Adrenal gland (tissue), 19 donors: ENCODE measurements at regions of chr2 and their contacts with region 1.

Region 1: DNA sequence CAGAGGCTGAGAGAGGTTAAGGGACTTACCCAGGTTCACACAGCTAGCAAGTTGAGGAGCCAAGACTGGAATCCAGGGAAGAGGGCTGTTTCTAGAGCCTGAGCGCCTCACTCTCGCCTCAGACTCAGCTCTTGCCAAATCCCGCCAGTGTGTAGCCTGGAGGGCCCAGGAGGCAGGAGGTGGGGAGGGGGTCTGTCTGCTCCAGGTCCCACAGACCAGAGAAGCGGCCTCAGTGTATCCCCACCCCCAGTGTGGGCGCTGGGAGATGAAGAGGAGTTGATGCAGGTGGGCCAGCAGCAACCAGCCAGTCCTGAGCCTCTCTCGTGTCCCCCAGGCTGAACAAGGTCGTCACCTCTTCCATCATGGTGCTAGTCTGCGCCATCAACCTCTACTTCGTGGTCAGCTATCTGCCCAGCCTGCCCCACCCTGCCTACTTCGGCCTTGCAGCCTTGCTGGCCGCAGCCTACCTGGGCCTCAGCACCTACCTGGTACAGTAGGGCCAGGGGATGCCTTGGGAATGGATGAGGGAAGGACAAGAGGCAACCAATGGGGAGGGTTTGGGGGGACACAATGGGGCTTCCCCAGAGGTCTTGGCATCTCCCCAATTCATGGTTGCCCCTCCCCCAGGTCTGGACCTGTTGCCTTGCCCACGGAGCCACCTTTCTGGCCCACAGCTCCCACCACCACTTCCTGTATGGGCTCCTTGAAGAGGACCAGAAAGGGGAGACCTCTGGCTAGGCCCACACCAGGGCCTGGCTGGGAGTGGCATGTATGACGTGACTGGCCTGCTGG is 5.2 kb upstream of the CTDSP1 start:
- DNase-seq: peak in 2 of 7 donors; percentile 44 to 56
- H3K4me3 ChIP-seq: no peak overlapping the region
- H3K27ac ChIP-seq: no peak overlapping the region
- H3K4me1 ChIP-seq: peaks cover 24 to 27% of the 10 kb centered on the region in 2 donors
- H3K27me3 ChIP-seq: no peaks in the 10 kb centered on the region
- CTCF ChIP-seq: no peak
- POLR2A ChIP-seq: no peak

Region 2: GRCh38 chr2:218295029-218295428 is 99.5 kb before region 1 on chr2:
- intact Hi-C with region 1: loop called (anchors 5 kb)
- DNase-seq: no peak
- H3K4me3 ChIP-seq: no peak overlapping the region
- H3K27ac ChIP-seq: peak overlapping the region in 2 of 5 donors; percentile 18 to 41
- H3K4me1 ChIP-seq: peaks cover 15 to 38% of the 10 kb centered on the region in 2 donors
- H3K27me3 ChIP-seq: no peaks in the 10 kb centered on the region
- CTCF ChIP-seq: no peak
- POLR2A ChIP-seq: no peak